ENCODE measurements at regions of chr2 and their contacts with region 1.

Region 1: DNA sequence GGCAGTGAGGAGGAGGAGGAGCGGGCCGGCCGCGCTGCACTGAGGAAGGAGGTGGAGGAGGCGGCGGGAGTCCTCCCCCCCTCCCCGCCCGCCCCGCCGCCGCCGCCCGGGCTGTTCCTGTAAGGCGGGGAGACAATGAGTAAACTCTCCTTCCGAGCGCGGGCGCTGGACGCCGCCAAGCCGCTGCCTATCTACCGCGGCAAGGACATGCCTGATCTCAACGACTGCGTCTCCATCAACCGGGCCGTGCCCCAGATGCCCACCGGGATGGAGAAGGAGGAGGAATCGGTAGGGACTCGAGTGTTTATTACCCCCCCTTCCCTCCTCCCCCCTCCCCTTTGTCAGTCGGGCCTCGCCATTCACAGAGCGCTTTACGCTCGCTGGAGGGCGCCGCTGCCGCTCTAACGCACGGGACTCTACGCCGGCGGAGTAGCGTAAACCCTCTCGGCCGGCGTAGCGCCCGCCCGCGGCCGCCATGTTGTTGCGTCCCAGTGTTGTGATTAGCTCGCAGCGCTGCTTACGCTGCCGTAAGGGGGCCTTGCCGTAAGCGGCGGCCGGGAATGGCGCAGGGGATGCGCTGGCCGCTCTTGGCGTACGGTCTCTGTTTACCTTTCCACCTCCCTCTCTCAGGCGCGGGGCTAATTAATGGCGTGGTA is 460 bp downstream of the EPC2 start:
- DNase-seq: peak; percentile 94
- H3K4me3 Mint-ChIP-seq: peak overlapping the region; percentile 90
- H3K27ac Mint-ChIP-seq: peak overlapping the region; percentile 97
- H3K4me1 Mint-ChIP-seq: peaks cover 43% of the 10 kb centered on the region
- H3K27me3 Mint-ChIP-seq: no peaks in the 10 kb centered on the region

Region 2: DNA sequence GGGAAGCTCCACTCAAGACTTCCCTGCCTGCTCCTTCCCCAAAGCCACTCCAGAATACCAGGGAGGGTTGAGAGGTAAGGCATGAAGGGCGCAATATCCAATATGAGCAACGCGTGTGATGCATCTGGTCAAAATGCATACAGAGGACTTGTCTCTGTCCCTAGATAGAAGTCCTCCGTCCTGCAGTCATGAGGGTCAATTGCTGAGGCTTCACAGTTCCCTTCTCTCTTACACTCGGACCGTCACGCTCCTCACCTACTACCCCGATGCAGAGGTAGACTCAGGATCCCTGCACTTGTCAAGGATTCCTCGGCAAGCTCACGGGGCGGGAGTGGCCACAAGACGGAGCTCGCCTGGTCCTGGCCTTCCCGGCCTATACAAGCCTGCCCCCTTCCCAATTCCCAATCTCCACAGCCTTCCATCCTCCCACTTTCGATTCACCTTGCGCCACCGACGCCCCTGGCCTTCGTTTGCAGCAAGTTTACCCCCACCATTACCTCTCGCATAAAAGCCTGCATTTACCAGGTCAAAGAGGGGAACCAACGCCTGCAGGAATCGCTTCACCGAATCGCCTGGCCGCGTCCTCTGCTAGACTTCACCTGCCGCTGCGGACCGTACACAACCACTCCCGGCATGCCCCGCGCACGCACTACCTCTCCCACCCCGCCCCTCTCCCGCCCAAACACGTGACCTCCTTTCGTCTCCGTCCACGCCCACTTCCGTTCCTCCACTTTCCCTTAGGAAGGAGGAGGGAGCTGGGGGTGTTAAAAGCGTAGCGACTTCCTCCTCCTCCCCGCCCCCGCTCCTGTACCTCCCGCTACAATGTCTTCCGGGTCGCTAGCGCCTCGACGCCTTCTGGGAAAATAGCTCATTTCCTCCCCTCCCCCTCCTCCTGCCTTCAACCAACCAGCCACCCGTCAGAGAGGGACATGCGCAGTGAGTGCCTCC is 624.6 kb before region 1 on chr2 and contains the start of gene ORC4:
- CTCF ChIA-PET with region 1: no interaction called
- intact Hi-C with region 1: loop called (anchors 1 kb)
- DNase-seq: peak; percentile 99
- H3K4me3 Mint-ChIP-seq: peak within 1 kb of the TSS; percentile 100
- H3K27ac Mint-ChIP-seq: peak within 1 kb of the TSS; percentile 96
- H3K4me1 Mint-ChIP-seq: peaks cover 44% of the 10 kb centered on the region
- H3K27me3 Mint-ChIP-seq: no peaks in the 10 kb centered on the region
- total RNA-seq, gene ORC4: 35.9 to 38.8 TPM

Region 3: GRCh38 chr2:148545390-148546256 is 99.4 kb before region 1 on chr2:
- CTCF ChIA-PET with region 1: no interaction called
- intact Hi-C with region 1: loop called (anchors 1 kb)
- DNase-seq: peak; percentile 72
- H3K4me3 Mint-ChIP-seq: no peak overlapping the region
- H3K27ac Mint-ChIP-seq: peak overlapping the region; percentile 88
- H3K4me1 Mint-ChIP-seq: peaks cover 43% of the 10 kb centered on the region
- H3K27me3 Mint-ChIP-seq: no peaks in the 10 kb centered on the region

Region 4: GRCh38 chr2:148614322-148615049 is 30.5 kb before region 1 on chr2:
- CTCF ChIA-PET with region 1: no interaction called
- intact Hi-C with region 1: loop called (anchors 1 kb)
- DNase-seq: peak; percentile 43
- H3K4me3 Mint-ChIP-seq: no peak overlapping the region
- H3K27ac Mint-ChIP-seq: no peak overlapping the region
- H3K4me1 Mint-ChIP-seq: peaks cover 11% of the 10 kb centered on the region
- H3K27me3 Mint-ChIP-seq: no peaks in the 10 kb centered on the region

Region 5: GRCh38 chr2:148684507-148684906 is 39.5 kb after region 1 on chr2:
- CTCF ChIA-PET with region 1: no interaction called
- intact Hi-C with region 1: no loop called
- DNase-seq: no peak
- H3K4me3 Mint-ChIP-seq: no peak overlapping the region
- H3K27ac Mint-ChIP-seq: no peak overlapping the region
- H3K4me1 Mint-ChIP-seq: peaks cover 51% of the 10 kb centered on the region
- H3K27me3 Mint-ChIP-seq: no peaks in the 10 kb centered on the region

Region 6: GRCh38 chr2:148720501-148721001 is 75.5 kb after region 1 on chr2:
- CTCF ChIA-PET with region 1: no interaction called
- intact Hi-C with region 1: loop called (anchors 5 kb)
- DNase-seq: peak; percentile 47
- H3K4me3 Mint-ChIP-seq: no peak overlapping the region
- H3K27ac Mint-ChIP-seq: peak overlapping the region; percentile 36
- H3K4me1 Mint-ChIP-seq: peaks cover 88% of the 10 kb centered on the region
- H3K27me3 Mint-ChIP-seq: no peaks in the 10 kb centered on the region

Region 7: GRCh38 chr2:148989882-148990493 is 345.0 kb after region 1 on chr2:
- CTCF ChIA-PET with region 1: no interaction called
- intact Hi-C with region 1: loop called (anchors 2 kb)
- DNase-seq: peak; percentile 70
- H3K4me3 Mint-ChIP-seq: no peak overlapping the region
- H3K27ac Mint-ChIP-seq: no peak overlapping the region
- H3K4me1 Mint-ChIP-seq: no peaks in the 10 kb centered on the region
- H3K27me3 Mint-ChIP-seq: no peaks in the 10 kb centered on the region